MCF 10A (cell line): ENCODE measurements at regions of chr6 and their contacts with region 1.

Region 1: GRCh38 chr6:122422614-122423267 is 23.3 kb downstream of the HSF2 start:
- DNase-seq: no peak
- H3K4me3 Mint-ChIP-seq: no peak overlapping the region
- H3K27ac Mint-ChIP-seq: no peak overlapping the region
- H3K4me1 Mint-ChIP-seq: no peaks in the 10 kb centered on the region
- H3K27me3 Mint-ChIP-seq: no peaks in the 10 kb centered on the region
- CTCF ChIP-seq: no peak

Region 2: DNA sequence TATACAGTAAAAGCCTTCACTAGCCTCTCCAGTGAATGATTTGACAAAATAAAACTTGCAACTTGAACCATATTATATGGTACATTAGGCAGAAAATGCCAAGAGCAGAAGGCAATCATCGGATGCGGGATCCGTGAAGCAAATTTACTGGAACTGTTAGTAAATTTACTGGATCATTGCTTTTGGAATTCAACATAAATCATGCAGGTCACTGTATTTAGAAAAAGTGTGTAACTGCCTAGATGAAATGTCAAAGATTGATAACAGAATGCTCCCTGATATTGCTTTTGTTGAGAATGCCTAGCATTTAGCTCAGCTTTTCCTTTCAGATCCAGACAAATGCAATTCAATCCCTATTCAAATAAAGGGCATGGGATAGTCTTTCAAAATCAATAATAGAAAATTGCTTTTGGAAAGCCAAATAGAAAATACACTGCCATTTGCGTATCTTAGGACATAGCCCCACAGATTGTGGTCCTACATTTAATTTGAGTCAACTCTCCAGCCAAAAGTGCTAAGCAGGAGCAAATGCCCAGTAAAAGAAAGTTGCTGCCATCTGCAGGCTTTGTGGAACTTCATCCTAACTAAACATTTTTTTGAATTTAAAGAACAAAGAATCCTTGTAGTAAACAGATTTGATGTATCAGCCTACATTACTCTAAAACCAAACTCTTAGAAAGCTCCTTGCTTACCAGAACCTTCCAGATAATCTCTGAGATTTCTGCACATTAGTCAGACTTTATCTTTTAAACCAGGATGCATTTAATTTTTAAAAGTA is 132.8 kb before region 1 on chr6:
- CTCF ChIA-PET with region 1: no interaction called
- POLR2A ChIA-PET with region 1: no interaction called
- intact Hi-C with region 1: no loop called
- DNase-seq: peak; percentile 34
- H3K4me3 Mint-ChIP-seq: no peak overlapping the region
- H3K27ac Mint-ChIP-seq: no peak overlapping the region
- H3K4me1 Mint-ChIP-seq: no peaks in the 10 kb centered on the region
- H3K27me3 Mint-ChIP-seq: peaks cover 71% of the 10 kb centered on the region
- CTCF ChIP-seq: peak; percentile 20

Region 3: GRCh38 chr6:122408702-122409458 is 13.9 kb before region 1 on chr6:
- CTCF ChIA-PET with region 1: no interaction called
- POLR2A ChIA-PET with region 1: interaction called, 11 read pairs
- intact Hi-C with region 1: no loop called
- DNase-seq: no peak
- H3K4me3 Mint-ChIP-seq: no peak overlapping the region
- H3K27ac Mint-ChIP-seq: no peak overlapping the region
- H3K4me1 Mint-ChIP-seq: peaks cover 25% of the 10 kb centered on the region
- H3K27me3 Mint-ChIP-seq: no peaks in the 10 kb centered on the region
- CTCF ChIP-seq: no peak

Region 4: GRCh38 chr6:122459213-122459612 is 36.5 kb after region 1 on chr6:
- CTCF ChIA-PET with region 1: no interaction called
- POLR2A ChIA-PET with region 1: no interaction called
- intact Hi-C with region 1: no loop called
- DNase-seq: no peak
- H3K4me3 Mint-ChIP-seq: no peak overlapping the region
- H3K27ac Mint-ChIP-seq: no peak overlapping the region
- H3K4me1 Mint-ChIP-seq: peaks cover 26% of the 10 kb centered on the region
- H3K27me3 Mint-ChIP-seq: no peaks in the 10 kb centered on the region
- CTCF ChIP-seq: no peak